ENCODE measurements at regions of chr2 and their contacts with region 1.

Region 1: GRCh38 chr2:119011162-119011909 is 69.3 kb downstream of the MARCO start:
- DNase-seq: no peak
- ATAC-seq: peak; percentile 95
- H3K4me3 ChIP-seq: peak overlapping the region; percentile 13 to 33; a peak in 3 of 4 replicates
- H3K27ac ChIP-seq: no peak overlapping the region
- H3K4me1 ChIP-seq: no peaks in the 10 kb centered on the region
- H3K27me3 ChIP-seq: peaks cover 29% of the 10 kb centered on the region
- CTCF ChIP-seq: peak; percentile 90

Region 2: GRCh38 chr2:119174216-119175037 is 163.1 kb after region 1 on chr2:
- CTCF ChIA-PET with region 1: interaction called, 8 read pairs
- POLR2A ChIA-PET with region 1: no interaction called
- in situ Hi-C with region 1: no loop called
- intact Hi-C with region 1: loop called (anchors 5 kb)
- DNase-seq: no peak
- ATAC-seq: peak; percentile 97
- H3K4me3 ChIP-seq: peak overlapping the region in 1 of 2 experiments; percentile 18; a peak in 2 of 4 replicates
- H3K27ac ChIP-seq: no peak overlapping the region
- H3K4me1 ChIP-seq: no peaks in the 10 kb centered on the region; the same call in 1 of the 2 replicates
- H3K27me3 ChIP-seq: no peaks in the 10 kb centered on the region
- CTCF ChIP-seq: peak; percentile 96

Region 3: DNA sequence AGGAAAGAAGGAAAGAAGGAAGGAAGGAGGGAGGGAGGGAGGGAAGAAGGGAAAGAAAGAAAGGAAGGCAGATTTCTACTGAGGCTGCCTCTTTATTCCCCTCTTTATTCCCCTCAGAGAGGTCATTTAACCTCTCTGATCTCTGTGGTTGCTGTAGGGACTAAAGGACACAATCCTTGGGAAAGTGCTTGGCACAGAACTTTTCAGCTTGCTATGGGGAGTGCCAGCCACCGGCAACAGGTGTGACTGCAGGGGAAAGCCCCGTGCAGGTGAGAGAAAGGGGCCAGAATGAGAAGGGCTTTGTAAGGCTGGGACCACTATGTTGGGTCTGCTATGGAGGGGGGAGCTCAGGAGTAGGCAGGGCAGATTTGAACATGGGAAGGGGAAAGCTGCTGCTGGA is 184.6 kb after region 1 on chr2:
- CTCF ChIA-PET with region 1: no interaction called
- POLR2A ChIA-PET with region 1: no interaction called
- in situ Hi-C with region 1: no loop called
- intact Hi-C with region 1: no loop called
- DNase-seq: no peak
- ATAC-seq: peak; percentile 25
- H3K4me3 ChIP-seq: no peak overlapping the region
- H3K27ac ChIP-seq: no peak overlapping the region
- H3K4me1 ChIP-seq: no peaks in the 10 kb centered on the region
- H3K27me3 ChIP-seq: no peaks in the 10 kb centered on the region
- CTCF ChIP-seq: no peak

Region 4: DNA sequence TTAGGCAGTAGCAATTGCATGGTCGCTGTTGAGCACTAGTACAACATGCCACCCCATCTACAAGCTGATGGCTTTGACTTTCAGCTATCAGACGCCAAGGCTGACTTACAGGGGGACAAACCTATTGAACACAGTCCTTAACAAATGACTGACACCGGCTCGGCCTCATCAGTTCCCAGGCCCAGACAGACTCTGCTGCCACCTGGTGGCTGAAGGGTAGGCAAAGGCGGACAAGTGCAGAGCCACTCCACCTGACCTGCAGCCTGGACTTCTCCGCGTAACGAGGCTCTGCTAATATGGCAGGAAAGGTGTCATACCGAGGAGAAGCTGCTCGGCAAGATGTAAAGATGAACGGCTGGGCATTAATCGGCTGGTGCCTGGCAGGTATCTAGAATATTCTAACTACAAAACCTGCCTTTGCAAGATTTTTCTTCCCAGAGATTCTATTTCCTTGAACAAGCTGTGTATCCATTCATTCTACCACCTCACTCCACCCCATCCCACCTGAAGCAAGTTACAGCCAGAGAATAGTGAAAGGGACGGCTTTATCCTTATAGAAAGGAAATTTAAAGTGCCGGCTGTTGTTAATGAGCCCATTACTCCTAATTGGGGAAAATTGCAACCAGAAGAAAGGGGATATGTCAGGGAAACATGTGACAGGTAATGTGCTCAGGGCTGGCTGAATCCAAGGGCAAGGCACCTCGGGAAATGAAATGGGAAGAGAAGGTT is 279.7 kb after region 1 on chr2:
- CTCF ChIA-PET with region 1: no interaction called
- POLR2A ChIA-PET with region 1: no interaction called
- in situ Hi-C with region 1: no loop called
- intact Hi-C with region 1: loop called (anchors 1 kb)
- DNase-seq: peak; percentile 24
- ATAC-seq: peak; percentile 98
- H3K4me3 ChIP-seq: no peak overlapping the region
- H3K27ac ChIP-seq: no peak overlapping the region
- H3K4me1 ChIP-seq: peaks cover 3% of the 10 kb centered on the region; the same call in 1 of the 2 replicates
- H3K27me3 ChIP-seq: no peaks in the 10 kb centered on the region
- CTCF ChIP-seq: peak; percentile 91

Measured in Panc1 (cell line).